HEK293 (cell line): ENCODE measurements at regions of chr17 and their contacts with region 1.

Region 1: DNA sequence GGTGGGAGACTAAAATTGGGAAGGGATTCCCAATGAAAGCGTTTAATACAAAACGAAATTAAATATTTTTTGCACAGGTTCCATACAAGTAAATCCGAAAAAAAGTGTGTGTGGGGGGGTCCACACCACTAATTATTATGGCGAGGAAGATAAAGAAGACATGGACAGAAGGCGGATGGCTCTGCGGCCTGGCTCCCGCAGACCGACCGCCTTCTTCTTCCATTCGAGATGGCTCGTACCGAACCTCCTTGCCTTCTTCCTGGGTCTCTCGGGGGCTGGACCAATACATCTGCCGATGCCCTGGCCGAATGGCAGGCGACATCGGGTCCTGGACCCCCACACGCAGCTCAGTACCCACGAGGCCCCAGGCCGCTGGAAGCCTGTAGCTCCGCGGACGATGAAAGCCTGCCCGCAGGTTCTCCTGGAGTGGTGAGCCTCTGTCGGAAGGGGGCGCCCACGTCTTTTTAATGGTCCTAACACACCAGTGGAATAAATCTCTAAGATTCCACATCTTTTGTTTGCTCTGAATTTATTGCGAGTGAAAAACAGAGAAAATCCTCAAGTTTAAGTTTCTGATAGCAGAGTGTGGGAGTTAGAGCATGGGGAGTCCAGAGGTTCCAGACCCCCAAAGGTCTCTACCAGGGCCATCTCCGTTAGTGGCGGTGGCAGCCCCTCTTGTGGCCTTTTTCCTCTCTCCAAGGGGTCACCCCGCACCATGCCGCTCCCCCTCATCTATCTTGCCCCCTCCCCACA is 1.4 kb downstream of the PRAC2 start:
- H3K4me3 ChIP-seq: no peak overlapping the region
- H3K27ac ChIP-seq: no peak overlapping the region
- H3K4me1 ChIP-seq: peaks cover 3% of the 10 kb centered on the region
- CTCF ChIP-seq: peak; percentile 56

Region 2: DNA sequence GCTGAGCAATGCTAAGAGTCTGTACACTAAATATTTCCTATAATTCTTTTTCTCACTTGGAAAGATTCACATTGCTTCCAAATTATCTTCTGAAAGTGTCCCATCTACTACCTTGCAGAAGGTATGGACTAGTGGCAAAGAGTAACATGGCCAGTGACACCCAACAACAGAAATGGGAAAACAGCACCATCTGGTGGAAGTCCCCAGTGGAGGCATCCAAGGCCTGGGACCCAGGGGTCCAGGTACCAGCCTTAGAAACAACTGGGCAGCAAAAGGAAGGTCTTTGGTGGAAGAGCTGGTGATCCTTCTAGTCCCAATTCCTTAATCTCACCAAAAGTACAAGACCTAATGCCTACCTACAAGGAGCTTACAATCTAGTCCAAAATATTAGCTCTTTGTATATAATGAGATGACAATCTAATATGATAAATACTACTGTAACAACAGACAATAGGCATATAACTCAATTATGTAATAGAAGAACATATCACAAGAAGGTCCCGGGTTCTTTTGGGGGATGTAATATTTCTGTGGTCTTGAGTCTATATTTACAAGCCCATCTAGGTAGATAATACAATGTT is 349.7 kb before region 1 on chr17:
- CTCF ChIA-PET with region 1: no interaction called
- POLR2A ChIA-PET with region 1: no interaction called
- H3K4me3 ChIP-seq: no peak overlapping the region
- H3K27ac ChIP-seq: no peak overlapping the region
- H3K4me1 ChIP-seq: no peaks in the 10 kb centered on the region
- CTCF ChIP-seq: no peak

Region 3: DNA sequence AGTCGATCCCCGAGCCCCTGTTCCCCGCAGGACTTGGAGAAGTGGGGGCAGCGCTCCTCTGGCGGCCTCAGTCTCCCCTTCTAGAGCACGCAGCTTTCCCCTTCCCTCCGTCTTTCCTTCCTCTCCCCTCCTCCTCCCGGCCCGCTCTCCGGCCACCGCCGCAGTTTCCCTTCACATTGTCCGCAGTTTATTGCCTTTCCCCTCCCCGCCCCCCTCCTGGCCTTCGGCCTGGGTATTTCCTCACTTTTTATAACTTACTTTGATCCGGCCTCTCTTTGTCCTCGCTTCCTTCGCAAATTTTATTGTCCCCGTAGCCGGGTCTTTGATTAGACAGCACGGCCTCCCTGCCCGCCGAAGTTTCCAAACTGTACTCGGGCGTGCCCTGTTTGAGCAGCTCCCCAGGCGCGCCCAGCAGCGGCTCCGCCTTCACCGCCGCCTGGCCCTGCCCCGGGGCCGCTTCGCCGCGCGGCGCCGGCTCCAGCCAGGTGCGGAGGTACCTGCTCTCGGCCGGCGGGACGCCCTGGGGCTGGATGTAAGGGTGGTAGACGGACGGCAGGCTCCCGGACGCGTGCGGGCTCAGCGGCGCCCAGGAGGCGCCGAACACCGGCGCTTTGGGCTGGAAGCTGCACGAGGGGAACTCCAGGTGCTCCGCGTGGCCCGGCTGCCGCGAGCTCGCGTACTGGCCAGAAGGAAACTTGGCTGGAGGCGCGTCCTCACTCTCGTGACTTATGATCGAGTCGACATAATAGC is 98.8 kb before region 1 on chr17:
- CTCF ChIA-PET with region 1: no interaction called
- POLR2A ChIA-PET with region 1: no interaction called
- H3K4me3 ChIP-seq: peak overlapping the region; percentile 78
- H3K27ac ChIP-seq: peak overlapping the region; percentile 100
- H3K4me1 ChIP-seq: peaks cover 21% of the 10 kb centered on the region
- CTCF ChIP-seq: no peak

Region 4: GRCh38 chr17:48704361-48705248 is 19.8 kb before region 1 on chr17:
- CTCF ChIA-PET with region 1: interaction called, 16 read pairs
- POLR2A ChIA-PET with region 1: no interaction called
- H3K4me3 ChIP-seq: no peak overlapping the region
- H3K27ac ChIP-seq: no peak overlapping the region
- H3K4me1 ChIP-seq: no peaks in the 10 kb centered on the region; the same call in 1 of the 2 replicates
- CTCF ChIP-seq: no peak

Region 5: GRCh38 chr17:48756830-48757251 is 32.4 kb after region 1 on chr17:
- CTCF ChIA-PET with region 1: interaction called, 14 read pairs
- POLR2A ChIA-PET with region 1: no interaction called
- H3K4me3 ChIP-seq: no peak overlapping the region
- H3K27ac ChIP-seq: no peak overlapping the region
- H3K4me1 ChIP-seq: no peaks in the 10 kb centered on the region
- CTCF ChIP-seq: no peak

Region 6: DNA sequence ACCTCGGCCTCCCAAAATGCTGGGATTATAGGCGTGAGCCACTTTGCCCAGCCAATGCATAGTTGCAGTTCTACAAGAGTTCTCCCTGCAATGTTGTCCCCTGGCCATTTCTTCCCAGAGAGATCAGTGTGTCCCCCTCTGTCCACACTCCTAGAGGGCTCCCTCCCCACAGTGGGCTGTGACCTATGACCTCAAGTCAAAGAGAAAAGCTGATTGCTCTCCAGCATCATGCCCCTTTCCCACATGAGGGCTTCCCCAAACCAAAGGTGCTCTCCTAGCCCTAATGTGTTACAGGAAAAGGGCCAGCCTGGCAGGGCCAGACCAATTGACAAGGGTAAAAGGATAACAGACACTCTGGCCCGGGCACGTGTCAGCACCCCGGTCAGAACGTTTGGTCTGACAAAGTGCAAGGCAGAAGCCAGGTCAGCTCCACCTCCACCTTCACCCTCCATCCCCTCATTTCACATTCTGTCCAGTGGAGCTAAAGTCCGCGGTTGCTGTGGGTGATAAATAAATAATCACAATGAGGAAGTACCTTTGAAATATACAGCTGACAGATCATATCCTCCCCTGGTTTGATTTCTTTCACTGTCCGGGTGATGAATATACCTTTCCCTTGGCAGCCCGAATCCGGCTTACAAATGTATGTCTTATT is 74.8 kb after region 1 on chr17:
- CTCF ChIA-PET with region 1: interaction called, 246 read pairs
- POLR2A ChIA-PET with region 1: no interaction called
- H3K4me3 ChIP-seq: no peak overlapping the region
- H3K27ac ChIP-seq: no peak overlapping the region
- H3K4me1 ChIP-seq: no peaks in the 10 kb centered on the region; the same call in 1 of the 2 replicates
- CTCF ChIP-seq: no peak

Region 7: GRCh38 chr17:48816774-48817590 is 92.6 kb after region 1 on chr17 and contains the start of gene TTLL6:
- CTCF ChIA-PET with region 1: interaction called, 12 read pairs
- POLR2A ChIA-PET with region 1: no interaction called
- H3K4me3 ChIP-seq: peak within 1 kb of the TSS; percentile 43
- H3K27ac ChIP-seq: no peak within 1 kb of the TSS; the same call in 1 of the 2 replicates
- H3K4me1 ChIP-seq: peaks cover 4% of the 10 kb centered on the region
- CTCF ChIP-seq: peak; percentile 44; the same call in 1 of the 2 replicates